MCF 10A (cell line): ENCODE measurements at regions of chr6 and their contacts with region 1.

Region 1: GRCh38 chr6:34392497-34393190 is at the start of gene NUDT3:
- DNase-seq: peak; percentile 90
- H3K4me3 Mint-ChIP-seq: no peak within 1 kb of the TSS
- H3K27ac Mint-ChIP-seq: peak within 1 kb of the TSS; percentile 14
- H3K4me1 Mint-ChIP-seq: peaks cover 12% of the 10 kb centered on the region
- H3K27me3 Mint-ChIP-seq: no peaks in the 10 kb centered on the region
- CTCF ChIP-seq: peak; percentile 84
- total RNA-seq, gene NUDT3: 22.4 and 23.6 TPM in 2 replicates

Region 2: DNA sequence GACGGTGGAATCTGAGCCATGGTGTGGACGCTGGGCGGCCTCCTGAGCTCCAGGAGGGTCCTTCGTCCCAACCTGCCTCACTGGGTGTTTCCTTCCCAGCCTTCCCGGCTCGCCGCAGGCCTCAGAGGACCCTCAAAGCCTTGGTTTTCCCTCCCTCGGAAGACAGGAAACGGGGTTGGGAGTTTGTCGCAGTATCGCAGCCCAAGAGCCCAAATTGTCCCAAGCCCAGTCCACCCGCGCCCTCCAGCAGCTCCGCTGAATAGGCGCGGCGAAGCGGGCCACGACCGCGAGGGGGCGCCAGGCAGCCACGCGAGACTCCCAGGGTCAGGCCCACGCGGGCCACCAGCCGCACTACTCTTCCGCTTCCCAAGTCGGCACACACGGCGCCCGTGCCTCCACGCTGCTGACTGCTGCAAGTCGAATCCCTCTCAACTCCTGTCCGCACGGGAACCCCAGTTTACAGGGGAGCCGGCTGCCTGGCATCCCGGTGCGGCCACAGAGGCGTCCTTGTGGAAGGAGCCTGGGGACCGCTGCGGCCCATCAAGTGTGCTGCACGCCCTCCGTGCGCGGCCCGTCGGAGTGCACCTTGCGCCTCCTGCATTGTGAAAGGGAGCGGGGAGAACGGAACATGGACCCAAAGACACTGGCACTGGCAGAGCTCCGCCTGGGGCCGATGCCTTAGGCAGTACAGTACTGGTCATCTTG is 196.4 kb before region 1 on chr6:
- CTCF ChIA-PET with region 1: interaction called, 4 read pairs
- POLR2A ChIA-PET with region 1: interaction called, 7 read pairs
- intact Hi-C with region 1: loop called (anchors 1 kb)
- DNase-seq: peak; percentile 62
- H3K4me3 Mint-ChIP-seq: peak overlapping the region; percentile 66
- H3K27ac Mint-ChIP-seq: no peak overlapping the region
- H3K4me1 Mint-ChIP-seq: peaks cover 7% of the 10 kb centered on the region
- H3K27me3 Mint-ChIP-seq: no peaks in the 10 kb centered on the region
- CTCF ChIP-seq: peak; percentile 97

Region 3: GRCh38 chr6:34248727-34249551 is 143.7 kb before region 1 on chr6 and contains the start of gene SMIM29:
- CTCF ChIA-PET with region 1: interaction called, 46 read pairs
- POLR2A ChIA-PET with region 1: interaction called, 45 read pairs
- intact Hi-C with region 1: loop called (anchors 1 kb)
- DNase-seq: peak; percentile 95
- H3K4me3 Mint-ChIP-seq: peak within 1 kb of the TSS; percentile 84
- H3K27ac Mint-ChIP-seq: peak within 1 kb of the TSS; percentile 88
- H3K4me1 Mint-ChIP-seq: peaks cover 33% of the 10 kb centered on the region
- H3K27me3 Mint-ChIP-seq: no peaks in the 10 kb centered on the region
- CTCF ChIP-seq: peak; percentile 95
- total RNA-seq, gene SMIM29: 12.0 and 25.7 TPM in 2 replicates

Region 4: GRCh38 chr6:34315780-34316179 is 76.9 kb before region 1 on chr6:
- CTCF ChIA-PET with region 1: no interaction called
- POLR2A ChIA-PET with region 1: no interaction called
- intact Hi-C with region 1: no loop called
- DNase-seq: no peak
- H3K4me3 Mint-ChIP-seq: no peak overlapping the region
- H3K27ac Mint-ChIP-seq: no peak overlapping the region
- H3K4me1 Mint-ChIP-seq: no peaks in the 10 kb centered on the region
- H3K27me3 Mint-ChIP-seq: no peaks in the 10 kb centered on the region
- CTCF ChIP-seq: no peak

Region 5: DNA sequence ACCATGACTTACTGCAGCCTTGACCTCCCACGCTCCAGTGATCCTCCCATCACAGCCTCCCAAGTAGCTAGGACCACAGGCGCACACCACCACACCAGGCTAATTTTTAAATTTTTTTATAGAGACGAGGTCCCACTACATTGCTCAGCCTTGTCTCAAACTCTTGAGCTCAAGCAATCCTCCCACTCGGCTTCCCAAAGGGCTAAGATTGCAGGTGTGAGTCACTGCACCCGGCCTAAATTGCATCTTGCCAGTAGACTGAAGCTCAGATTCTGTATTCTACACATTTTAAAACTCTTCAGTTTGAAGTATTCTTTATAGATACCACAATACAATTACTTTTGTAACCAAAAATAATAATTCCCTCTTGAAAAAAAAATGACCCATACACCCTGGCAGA is 11.6 kb before region 1 on chr6:
- CTCF ChIA-PET with region 1: interaction called, 7 read pairs
- POLR2A ChIA-PET with region 1: interaction called, 10 read pairs
- intact Hi-C with region 1: no loop called
- DNase-seq: peak; percentile 42
- H3K4me3 Mint-ChIP-seq: no peak overlapping the region
- H3K27ac Mint-ChIP-seq: no peak overlapping the region
- H3K4me1 Mint-ChIP-seq: peaks cover 19% of the 10 kb centered on the region
- H3K27me3 Mint-ChIP-seq: no peaks in the 10 kb centered on the region
- CTCF ChIP-seq: no peak

Region 6: GRCh38 chr6:34414999-34415858 is 22.6 kb after region 1 on chr6:
- CTCF ChIA-PET with region 1: interaction called, 19 read pairs
- POLR2A ChIA-PET with region 1: interaction called, 16 read pairs
- intact Hi-C with region 1: no loop called
- DNase-seq: peak; percentile 68
- H3K4me3 Mint-ChIP-seq: no peak overlapping the region
- H3K27ac Mint-ChIP-seq: no peak overlapping the region
- H3K4me1 Mint-ChIP-seq: peaks cover 5% of the 10 kb centered on the region
- H3K27me3 Mint-ChIP-seq: no peaks in the 10 kb centered on the region
- CTCF ChIP-seq: peak; percentile 54

Region 7: GRCh38 chr6:34425498-34426410 is 33.1 kb after region 1 on chr6 and contains the start of gene RPS10:
- CTCF ChIA-PET with region 1: interaction called, 4 read pairs
- POLR2A ChIA-PET with region 1: interaction called, 35 read pairs
- intact Hi-C with region 1: no loop called
- DNase-seq: peak; percentile 89
- H3K4me3 Mint-ChIP-seq: peak within 1 kb of the TSS; percentile 96
- H3K27ac Mint-ChIP-seq: peak within 1 kb of the TSS; percentile 100
- H3K4me1 Mint-ChIP-seq: peaks cover 16% of the 10 kb centered on the region
- H3K27me3 Mint-ChIP-seq: no peaks in the 10 kb centered on the region
- CTCF ChIP-seq: no peak
- total RNA-seq, gene RPS10: 1,490 and 1,644 TPM in 2 replicates